Naive thymus-derived CD4-positive, alpha-beta T cell (primary cell): ENCODE measurements at regions of chr1 and their contacts with region 1.

Region 1: GRCh38 chr1:111190651-111191451 is 9.6 kb downstream of the DENND2D start:
- DNase-seq: no peak
- ATAC-seq: no peak
- H3K4me3 ChIP-seq: no peak overlapping the region
- H3K4me3 Mint-ChIP-seq: peak overlapping the region; percentile 18 to 100 (median 64)
- H3K27ac ChIP-seq: peak overlapping the region; percentile 90
- H3K27ac Mint-ChIP-seq: peak overlapping the region; percentile 72 to 99 (median 96)
- H3K4me1 ChIP-seq: peaks cover 70 to 97% of the 10 kb centered on the region in 2 donors
- H3K4me1 Mint-ChIP-seq: peaks cover 79 to 100% (median 96%) of the 10 kb centered on the region in 7 donors
- H3K27me3 ChIP-seq: no peaks in the 10 kb centered on the region
- H3K27me3 Mint-ChIP-seq: no peaks in the 10 kb centered on the region

Region 2: DNA sequence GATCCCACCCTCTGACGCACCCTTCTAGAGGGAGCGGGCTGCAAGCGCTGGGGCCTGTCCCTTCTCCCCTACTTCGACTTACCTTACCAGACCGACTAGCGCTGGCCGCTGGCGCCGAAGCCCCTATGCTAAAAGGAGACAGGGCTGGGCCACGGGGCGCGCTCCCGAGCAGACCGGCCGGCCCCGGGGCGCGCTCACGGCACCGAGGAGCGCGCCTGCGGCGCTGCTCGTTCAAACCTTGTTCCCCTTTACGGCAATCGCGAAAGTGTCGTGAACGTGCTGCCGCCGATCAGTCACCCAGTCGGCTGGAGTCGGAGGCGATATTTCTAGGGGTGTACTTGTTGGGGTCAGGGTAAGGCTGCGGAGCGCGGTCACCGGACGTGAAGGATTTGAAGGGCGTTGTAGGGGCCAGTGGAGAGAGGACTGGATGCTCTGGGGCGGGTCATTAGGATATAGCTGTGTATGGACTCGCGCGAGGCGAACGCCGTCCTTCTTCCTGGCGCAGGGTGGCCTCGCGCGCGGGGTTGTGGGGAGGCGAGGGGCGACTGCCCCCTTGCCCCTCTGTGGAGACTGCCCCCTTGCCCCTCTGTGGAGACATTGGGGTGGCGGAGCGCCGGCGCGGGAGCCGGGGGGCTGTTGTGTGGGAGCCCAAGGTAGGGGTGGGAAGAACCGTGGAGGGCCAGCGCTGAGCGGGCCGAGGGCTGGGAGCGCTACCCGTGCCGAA is 50.7 kb before region 1 on chr1 and contains the starts of genes CEPT1 and DRAM2:
- CTCF ChIA-PET with region 1: interaction called, 3 read pairs
- POLR2A ChIA-PET with region 1: interaction called, 4 read pairs
- intact Hi-C with region 1: loop called (anchors 2 to 5 kb)
- DNase-seq: peak; percentile 77 to 93 (median 89)
- ATAC-seq: peak; percentile 95
- H3K4me3 ChIP-seq: peak within 1 kb of the TSS; percentile 91
- H3K4me3 Mint-ChIP-seq: peak within 1 kb of the TSS; percentile 87 to 100 (median 98)
- H3K27ac ChIP-seq: peak within 1 kb of the TSS; percentile 93
- H3K27ac Mint-ChIP-seq: peak within 1 kb of the TSS; percentile 91 to 100 (median 97)
- H3K4me1 ChIP-seq: peaks cover 18 to 22% of the 10 kb centered on the region in 2 donors
- H3K4me1 Mint-ChIP-seq: peaks cover 40 to 75% (median 57%) of the 10 kb centered on the region in 7 donors
- H3K27me3 ChIP-seq: no peaks in the 10 kb centered on the region
- H3K27me3 Mint-ChIP-seq: no peaks in the 10 kb centered on the region
- total RNA-seq, gene CEPT1: 39.1 to 57.5 (median 40.2) TPM
- total RNA-seq, gene DRAM2: 26.9 to 51.6 (median 43.5) TPM

Region 3: DNA sequence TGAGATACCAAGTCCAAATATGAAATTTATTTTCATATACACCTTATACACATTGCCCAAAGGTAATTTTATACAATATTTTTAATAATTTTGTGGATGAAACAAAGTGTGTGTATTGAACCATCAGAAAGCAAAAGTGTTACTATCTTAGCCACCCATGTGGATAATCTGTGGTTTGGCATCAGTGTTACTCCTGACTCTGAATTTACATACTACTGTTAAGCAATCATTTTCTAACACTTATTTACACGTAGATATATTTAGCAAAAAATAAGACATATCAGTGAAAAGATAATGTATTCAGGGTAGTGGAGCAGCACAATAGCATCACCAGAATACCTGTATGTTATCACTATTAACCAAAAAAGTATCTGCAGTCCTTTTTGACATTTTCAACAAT is 14.2 kb before region 1 on chr1:
- CTCF ChIA-PET with region 1: interaction called, 3 read pairs
- POLR2A ChIA-PET with region 1: interaction called, 248 read pairs
- intact Hi-C with region 1: loop called in 1 of 2 experiments (anchors 1 kb)
- DNase-seq: no peak
- ATAC-seq: no peak
- H3K4me3 ChIP-seq: no peak overlapping the region
- H3K4me3 Mint-ChIP-seq: no peak overlapping the region
- H3K27ac ChIP-seq: no peak overlapping the region
- H3K27ac Mint-ChIP-seq: peak overlapping the region in 3 of 9 donors; percentile 25 to 67 (median 50)
- H3K4me1 ChIP-seq: peaks cover 0 to 20% of the 10 kb centered on the region in 2 donors
- H3K4me1 Mint-ChIP-seq: peaks cover 17 to 94% (median 63%) of the 10 kb centered on the region in 7 donors
- H3K27me3 ChIP-seq: no peaks in the 10 kb centered on the region
- H3K27me3 Mint-ChIP-seq: no peaks in the 10 kb centered on the region